ENCODE measurements at regions of chr4 and their contacts with region 1.

Region 1: DNA sequence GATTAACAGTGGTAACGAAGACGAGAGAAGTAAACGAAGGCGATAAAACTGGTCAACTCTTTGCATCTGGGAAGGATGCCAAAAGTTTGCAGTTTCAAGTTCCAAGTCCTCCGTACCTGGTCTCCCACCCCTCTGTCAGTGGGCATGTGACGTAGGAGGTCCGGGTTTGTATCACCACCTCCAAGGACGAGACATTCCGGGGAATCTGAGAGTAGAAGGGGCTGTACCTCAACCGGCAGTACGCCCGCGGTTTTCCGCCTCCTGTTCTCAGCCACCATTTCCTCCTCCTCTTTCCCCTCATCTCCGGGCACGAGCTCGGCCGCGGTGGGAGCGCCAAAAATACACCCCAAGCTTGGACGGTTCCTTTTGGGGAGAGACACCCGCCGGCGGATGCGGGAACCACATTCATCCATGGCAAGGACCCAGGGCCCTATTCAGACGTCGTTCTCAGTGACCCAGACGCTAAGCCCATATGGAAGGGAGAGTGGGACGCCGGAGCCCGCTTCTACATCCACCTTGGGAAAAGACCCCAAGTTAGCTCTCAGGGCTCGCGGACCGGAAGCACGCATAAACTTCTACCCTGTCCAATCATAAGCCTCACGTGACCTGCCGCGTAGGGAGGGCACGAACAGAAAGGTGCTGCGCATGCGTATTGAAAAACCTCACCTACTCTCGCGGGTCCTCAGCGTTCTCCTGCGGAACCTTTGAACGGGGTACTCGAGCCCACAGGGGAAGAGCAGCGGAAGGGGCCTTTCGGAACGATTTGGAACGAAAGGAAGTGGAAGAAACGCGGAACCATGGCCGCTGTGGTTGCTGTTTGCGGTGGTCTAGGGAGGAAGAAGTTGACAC is at the starts of genes HELQ and MRPS18C:
- DNase-seq: peak; percentile 93 to 97
- H3K4me3 ChIP-seq: peak within 1 kb of the TSS; percentile 61
- H3K4me3 Mint-ChIP-seq: peak within 1 kb of the TSS; percentile 90
- H3K27ac Mint-ChIP-seq: peak within 1 kb of the TSS; percentile 92
- H3K4me1 ChIP-seq: no peaks in the 10 kb centered on the region
- H3K4me1 Mint-ChIP-seq: no peaks in the 10 kb centered on the region
- H3K27me3 ChIP-seq: no peaks in the 10 kb centered on the region
- H3K27me3 Mint-ChIP-seq: no peaks in the 10 kb centered on the region
- CTCF ChIP-seq: no peak
- total RNA-seq, gene HELQ: 10.6 and 11.6 TPM in 2 replicates
- total RNA-seq, gene MRPS18C: 68.7 and 74.1 TPM in 2 replicates

Region 2: DNA sequence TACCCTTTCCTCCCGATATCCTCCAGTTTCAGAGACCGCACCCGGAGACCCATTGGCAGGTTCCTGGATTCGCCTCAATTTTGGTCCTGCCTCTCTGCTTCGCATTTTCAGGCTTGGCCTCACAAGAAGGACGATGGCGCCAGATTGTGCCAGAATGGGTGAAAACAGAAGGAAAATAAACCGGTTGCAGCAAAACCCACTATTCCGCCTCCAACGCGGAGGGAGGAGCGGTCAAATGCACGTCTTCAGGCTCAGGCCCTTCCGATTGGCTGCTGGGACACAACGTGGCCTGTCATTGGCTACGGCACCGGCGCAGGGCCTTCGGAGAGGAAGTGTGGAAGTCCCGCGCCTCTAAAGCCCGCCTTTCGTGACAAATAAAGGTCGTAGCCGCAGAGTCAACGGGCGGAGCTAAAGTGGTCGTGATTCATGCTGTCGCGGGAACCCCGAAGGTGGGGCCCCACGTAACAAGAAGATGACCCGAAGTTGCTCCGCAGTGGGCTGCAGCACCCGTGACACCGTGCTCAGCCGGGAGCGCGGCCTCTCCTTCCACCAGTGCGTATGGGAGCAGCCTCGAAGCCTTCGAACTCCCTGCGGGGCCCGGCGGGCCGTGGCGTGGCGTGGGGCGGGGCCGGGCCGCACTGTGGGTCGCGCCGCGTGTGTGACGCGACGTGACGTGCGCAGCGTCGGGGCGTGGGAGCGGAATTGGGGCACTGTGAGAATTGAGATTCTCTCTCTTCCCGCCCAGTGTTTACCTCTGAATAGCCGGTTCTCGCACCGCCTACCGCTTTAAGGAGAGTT is 555.0 kb before region 1 on chr4 and contains the start of gene THAP9:
- CTCF ChIA-PET with region 1: no interaction called
- POLR2A ChIA-PET with region 1: no interaction called
- intact Hi-C with region 1: no loop called
- DNase-seq: peak; percentile 97 to 99
- H3K4me3 ChIP-seq: peak within 1 kb of the TSS; percentile 69
- H3K4me3 Mint-ChIP-seq: no peak within 1 kb of the TSS
- H3K27ac Mint-ChIP-seq: no peak within 1 kb of the TSS
- H3K4me1 ChIP-seq: peaks cover 12% of the 10 kb centered on the region; the same call in 1 of the 2 replicates
- H3K4me1 Mint-ChIP-seq: no peaks in the 10 kb centered on the region
- H3K27me3 ChIP-seq: no peaks in the 10 kb centered on the region
- H3K27me3 Mint-ChIP-seq: no peaks in the 10 kb centered on the region
- CTCF ChIP-seq: no peak
- total RNA-seq, gene THAP9: 6.8 and 7.9 TPM in 2 replicates

Region 3: GRCh38 chr4:83362492-83363329 is 92.8 kb before region 1 on chr4:
- CTCF ChIA-PET with region 1: no interaction called
- POLR2A ChIA-PET with region 1: interaction called, 4 read pairs
- intact Hi-C with region 1: loop called (anchors 1 kb)
- DNase-seq: peak in 1 of 2 experiments; percentile 13
- H3K4me3 ChIP-seq: no peak overlapping the region
- H3K4me3 Mint-ChIP-seq: no peak overlapping the region
- H3K27ac Mint-ChIP-seq: no peak overlapping the region
- H3K4me1 ChIP-seq: peaks cover 13% of the 10 kb centered on the region
- H3K4me1 Mint-ChIP-seq: peaks cover 12% of the 10 kb centered on the region
- H3K27me3 ChIP-seq: no peaks in the 10 kb centered on the region
- H3K27me3 Mint-ChIP-seq: no peaks in the 10 kb centered on the region
- CTCF ChIP-seq: peak in 1 of 2 experiments; percentile 36

Region 4: GRCh38 chr4:83369831-83370639 is 85.5 kb before region 1 on chr4:
- CTCF ChIA-PET with region 1: no interaction called
- POLR2A ChIA-PET with region 1: no interaction called
- intact Hi-C with region 1: loop called (anchors 1 kb)
- DNase-seq: peak in 1 of 2 experiments; percentile 9
- H3K4me3 ChIP-seq: no peak overlapping the region
- H3K4me3 Mint-ChIP-seq: no peak overlapping the region
- H3K27ac Mint-ChIP-seq: no peak overlapping the region
- H3K4me1 ChIP-seq: no peaks in the 10 kb centered on the region; the same call in 1 of the 2 replicates
- H3K4me1 Mint-ChIP-seq: no peaks in the 10 kb centered on the region
- H3K27me3 ChIP-seq: no peaks in the 10 kb centered on the region
- H3K27me3 Mint-ChIP-seq: no peaks in the 10 kb centered on the region
- CTCF ChIP-seq: no peak

Region 5: GRCh38 chr4:83484500-83485461 is 29.3 kb after region 1 on chr4 and contains the start of gene ABRAXAS1:
- CTCF ChIA-PET with region 1: no interaction called
- POLR2A ChIA-PET with region 1: no interaction called
- intact Hi-C with region 1: loop called (anchors 2 kb)
- DNase-seq: peak; percentile 91 to 94
- H3K4me3 ChIP-seq: peak within 1 kb of the TSS; percentile 89
- H3K4me3 Mint-ChIP-seq: peak within 1 kb of the TSS; percentile 90
- H3K27ac Mint-ChIP-seq: peak within 1 kb of the TSS; percentile 78
- H3K4me1 ChIP-seq: peaks cover 18% of the 10 kb centered on the region
- H3K4me1 Mint-ChIP-seq: peaks cover 10% of the 10 kb centered on the region
- H3K27me3 ChIP-seq: no peaks in the 10 kb centered on the region
- H3K27me3 Mint-ChIP-seq: no peaks in the 10 kb centered on the region
- CTCF ChIP-seq: no peak
- total RNA-seq, gene ABRAXAS1: 18.2 and 19.9 TPM in 2 replicates

Region 6: GRCh38 chr4:83731609-83732008 is 276.1 kb after region 1 on chr4:
- CTCF ChIA-PET with region 1: no interaction called
- POLR2A ChIA-PET with region 1: no interaction called
- intact Hi-C with region 1: no loop called
- DNase-seq: no peak
- H3K4me3 ChIP-seq: no peak overlapping the region
- H3K4me3 Mint-ChIP-seq: no peak overlapping the region
- H3K27ac Mint-ChIP-seq: no peak overlapping the region
- H3K4me1 ChIP-seq: no peaks in the 10 kb centered on the region
- H3K4me1 Mint-ChIP-seq: no peaks in the 10 kb centered on the region
- H3K27me3 ChIP-seq: no peaks in the 10 kb centered on the region
- H3K27me3 Mint-ChIP-seq: peaks cover 7% of the 10 kb centered on the region
- CTCF ChIP-seq: no peak

Region 7: DNA sequence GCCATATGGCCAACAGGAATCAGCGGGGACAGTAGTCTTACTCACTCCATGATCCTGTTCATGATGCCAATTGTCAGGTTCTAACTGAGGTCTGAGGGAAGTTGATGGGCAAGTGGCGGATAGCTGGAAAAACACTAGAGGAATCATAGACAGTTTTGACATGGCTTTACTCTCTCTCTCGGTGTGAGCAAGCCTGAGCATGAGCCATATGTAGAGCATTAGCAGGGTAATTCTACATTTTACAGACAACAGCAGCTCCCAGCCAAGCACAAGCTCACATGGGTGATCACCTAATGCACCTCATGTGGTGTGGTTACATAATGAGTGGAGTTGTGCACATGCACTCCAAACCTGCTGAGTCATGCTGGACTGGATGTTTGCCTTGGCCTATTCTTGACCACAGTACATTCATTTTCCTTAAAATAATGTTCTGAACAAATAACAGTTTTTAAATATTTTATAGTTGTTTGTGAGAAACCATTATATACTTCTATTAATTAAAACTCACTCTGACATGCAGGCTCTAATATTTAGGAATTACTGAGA is 509.6 kb after region 1 on chr4:
- CTCF ChIA-PET with region 1: no interaction called
- POLR2A ChIA-PET with region 1: no interaction called
- intact Hi-C with region 1: no loop called
- DNase-seq: no peak
- H3K4me3 ChIP-seq: no peak overlapping the region
- H3K4me3 Mint-ChIP-seq: no peak overlapping the region
- H3K27ac Mint-ChIP-seq: no peak overlapping the region
- H3K4me1 ChIP-seq: no peaks in the 10 kb centered on the region
- H3K4me1 Mint-ChIP-seq: no peaks in the 10 kb centered on the region
- H3K27me3 ChIP-seq: no peaks in the 10 kb centered on the region
- H3K27me3 Mint-ChIP-seq: no peaks in the 10 kb centered on the region
- CTCF ChIP-seq: no peak